ENCODE measurements at regions of chr2 and their contacts with region 1.

Region 1: GRCh38 chr2:73385595-73386341 is at the start of gene ALMS1:
- DNase-seq: peak; percentile 69 to 91 (median 84)
- H3K4me3 ChIP-seq: peak within 1 kb of the TSS; percentile 46 to 96 (median 83)
- H3K27ac ChIP-seq: peak within 1 kb of the TSS; percentile 38 to 96 (median 84)
- H3K27me3 ChIP-seq: no peaks in the 10 kb centered on the region
- CTCF ChIP-seq: peak in 37 of 56 donors; percentile 7 to 56 (median 28)
- total RNA-seq, gene ALMS1: 27.7 to 81.6 (median 46.9) TPM

Region 2: GRCh38 chr2:73293534-73294171 is 92.1 kb before region 1 on chr2 and contains the start of gene EGR4:
- intact Hi-C with region 1: loop called in 1 of 2 experiments (anchors 10 kb)
- DNase-seq: peak; percentile 48 to 93 (median 86)
- H3K4me3 ChIP-seq: peak within 1 kb of the TSS; percentile 17 to 70 (median 52)
- H3K27ac ChIP-seq: peak within 1 kb of the TSS in 15 of 59 donors; percentile 20 to 72 (median 38)
- H3K27me3 ChIP-seq: peaks cover 0 to 90% (median 40%) of the 10 kb centered on the region in 45 donors
- CTCF ChIP-seq: peak in 1 of 56 donors; percentile 12
- total RNA-seq, gene EGR4: 0.25 to 57.1 (median 3.0) TPM

Measured in dorsolateral prefrontal cortex (tissue), 120 donors.